ENCODE measurements at regions of chr5 and their contacts with region 1.

Region 1: GRCh38 chr5:61331407-61332357 is at the start of gene ZSWIM6:
- DNase-seq: peak; percentile 100
- ATAC-seq: peak; percentile 96 to 97
- H3K4me3 ChIP-seq: peak within 1 kb of the TSS; percentile 94
- H3K27ac ChIP-seq: peak within 1 kb of the TSS; percentile 98
- H3K4me1 ChIP-seq: peaks cover 4% of the 10 kb centered on the region
- H3K27me3 ChIP-seq: no peaks in the 10 kb centered on the region
- total RNA-seq, gene ZSWIM6: 6.3 to 7.9 (median 7.3) TPM

Region 2: GRCh38 chr5:61162010-61162831 is 169.5 kb before region 1 on chr5 and contains the start of gene SMIM15:
- intact Hi-C with region 1: loop called in 1 of 4 experiments (anchors 5 kb)
- DNase-seq: peak; percentile 91 to 96 (median 95)
- ATAC-seq: peak; percentile 98 to 99
- H3K4me3 ChIP-seq: peak within 1 kb of the TSS; percentile 60
- H3K27ac ChIP-seq: peak within 1 kb of the TSS; percentile 81
- H3K4me1 ChIP-seq: peaks cover 5% of the 10 kb centered on the region
- H3K27me3 ChIP-seq: no peaks in the 10 kb centered on the region
- total RNA-seq, gene SMIM15: 21.0 to 30.3 (median 27.3) TPM

Region 3: GRCh38 chr5:61371516-61371915 is 39.8 kb after region 1 on chr5:
- intact Hi-C with region 1: no loop called
- DNase-seq: no peak
- ATAC-seq: no peak
- H3K4me3 ChIP-seq: no peak overlapping the region
- H3K27ac ChIP-seq: no peak overlapping the region
- H3K4me1 ChIP-seq: no peaks in the 10 kb centered on the region
- H3K27me3 ChIP-seq: no peaks in the 10 kb centered on the region

Region 4: DNA sequence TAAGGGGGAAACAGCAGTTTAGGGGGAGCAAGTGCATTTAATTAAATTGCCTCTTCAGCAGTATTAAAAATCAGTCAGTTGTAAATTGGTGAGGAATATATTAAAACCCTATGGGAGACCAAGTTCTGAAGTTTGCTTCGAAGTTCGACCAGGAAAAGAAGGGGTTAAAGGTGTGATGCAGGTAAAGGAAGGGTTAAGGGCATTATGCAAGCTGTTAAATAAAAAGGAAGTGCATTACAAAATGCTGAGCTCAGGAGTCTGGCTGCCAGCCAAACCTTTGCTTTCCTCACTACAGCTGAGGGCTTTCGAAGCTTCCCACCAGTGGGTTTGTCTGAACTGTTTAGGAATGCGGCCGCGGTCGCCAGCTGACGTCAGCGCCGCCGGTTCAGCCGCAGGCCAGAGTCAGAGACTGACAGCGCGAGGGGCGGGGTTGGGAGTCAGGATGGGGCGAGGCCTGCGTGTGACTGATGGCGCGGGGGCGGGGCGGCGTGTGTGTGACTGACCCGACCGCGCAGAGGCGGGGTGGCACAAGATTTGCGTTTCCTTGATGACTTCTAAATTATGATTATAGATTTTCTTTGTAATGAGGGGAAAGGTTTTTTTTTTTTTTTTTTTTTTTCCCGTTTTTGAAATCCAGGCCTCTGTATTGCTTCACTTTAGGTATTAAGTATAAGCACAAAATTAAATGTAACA is 76.9 kb after region 1 on chr5:
- intact Hi-C with region 1: loop called in 1 of 4 experiments (anchors 10 kb)
- DNase-seq: peak; percentile 100
- ATAC-seq: peak; percentile 100
- H3K4me3 ChIP-seq: peak overlapping the region; percentile 13
- H3K27ac ChIP-seq: no peak overlapping the region
- H3K4me1 ChIP-seq: no peaks in the 10 kb centered on the region
- H3K27me3 ChIP-seq: no peaks in the 10 kb centered on the region

Region 5: DNA sequence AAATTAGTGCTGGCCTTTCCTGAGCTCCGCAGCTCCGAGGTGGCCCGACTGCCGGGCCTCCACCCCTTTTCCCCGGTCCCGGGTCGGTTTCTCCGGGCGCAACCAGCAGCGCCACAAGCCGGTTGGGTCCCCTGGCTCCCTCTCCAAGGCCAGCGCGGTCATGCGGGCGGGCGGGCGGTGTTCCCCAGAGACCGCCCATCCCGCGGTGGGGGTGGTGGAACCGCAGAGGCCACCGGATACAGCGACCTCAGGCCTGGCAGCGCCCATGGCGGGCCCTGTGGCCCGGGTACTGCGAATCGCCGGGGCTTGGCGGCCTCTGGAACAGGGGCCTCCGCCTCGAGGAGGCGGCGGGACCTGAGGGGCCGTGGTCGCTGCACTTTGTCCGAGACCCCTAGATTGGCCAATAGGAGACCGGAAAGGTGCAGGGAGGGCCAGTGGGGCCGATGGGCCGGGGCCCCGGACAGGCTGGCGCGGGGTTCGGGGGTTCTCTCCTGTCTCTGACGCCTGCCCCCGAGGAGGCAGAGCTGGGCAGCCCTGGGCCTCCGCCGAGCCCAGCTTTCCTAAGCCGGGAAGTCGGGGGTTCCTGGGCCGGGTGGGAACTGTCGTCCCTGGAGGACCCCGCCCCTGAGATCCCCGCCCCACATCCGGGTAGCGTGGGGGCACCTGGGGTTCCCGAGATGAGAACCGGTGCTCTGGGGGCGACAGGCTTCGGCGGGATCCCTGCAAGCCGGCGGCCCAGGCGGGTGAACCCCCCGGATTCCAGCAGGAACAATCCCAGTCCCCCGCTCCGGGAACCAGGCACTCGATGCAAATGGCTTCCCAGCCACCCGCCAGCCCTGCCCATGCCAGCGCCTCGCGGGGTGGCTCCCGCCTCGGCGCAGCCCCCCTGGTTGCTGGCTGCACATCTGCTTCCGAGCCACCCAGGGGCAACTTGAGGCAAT is 294.3 kb after region 1 on chr5:
- intact Hi-C with region 1: loop called in 1 of 4 experiments (anchors 10 kb)
- DNase-seq: peak; percentile 81 to 93 (median 91)
- ATAC-seq: peak; percentile 96
- H3K4me3 ChIP-seq: peak overlapping the region; percentile 69
- H3K27ac ChIP-seq: peak overlapping the region; percentile 68
- H3K4me1 ChIP-seq: peaks cover 3% of the 10 kb centered on the region
- H3K27me3 ChIP-seq: no peaks in the 10 kb centered on the region

Region 6: DNA sequence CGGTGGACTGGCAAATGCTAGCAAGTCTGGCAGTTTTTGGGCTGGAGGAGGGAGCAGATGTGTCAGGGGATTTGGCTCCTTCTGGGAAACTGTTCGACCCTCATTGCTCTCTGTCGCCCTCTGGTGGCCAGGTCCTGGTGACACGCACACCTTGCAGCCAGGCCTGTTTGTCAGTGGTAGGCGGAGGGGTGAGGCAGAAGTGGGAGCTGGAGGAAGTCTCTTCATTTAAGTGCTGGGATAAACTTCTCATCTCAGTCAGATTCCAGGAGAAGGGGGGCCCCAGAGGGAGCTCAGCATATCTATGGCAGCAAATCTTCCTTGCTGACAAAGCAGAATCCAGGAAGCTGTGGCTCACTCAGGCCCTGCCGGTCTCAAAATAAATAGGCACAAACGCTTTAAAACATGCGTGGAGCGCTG is 326.9 kb after region 1 on chr5:
- intact Hi-C with region 1: loop called in 2 of 4 experiments (anchors 5 to 10 kb)
- DNase-seq: peak; percentile 84 to 92 (median 91)
- ATAC-seq: peak; percentile 84 to 89
- H3K4me3 ChIP-seq: no peak overlapping the region
- H3K27ac ChIP-seq: peak overlapping the region; percentile 25
- H3K4me1 ChIP-seq: no peaks in the 10 kb centered on the region
- H3K27me3 ChIP-seq: no peaks in the 10 kb centered on the region

Measured in right cardiac atrium (tissue), 5 donors.